Calu3 (cell line): ENCODE measurements at regions of chr13 and their contacts with region 1.

Region 1: GRCh38 chr13:24328145-24328544 is 18.8 kb downstream of the C1QTNF9 start:
- DNase-seq: no peak
- H3K4me3 Mint-ChIP-seq: no peak overlapping the region
- H3K27ac Mint-ChIP-seq: no peak overlapping the region
- H3K4me1 Mint-ChIP-seq: no peaks in the 10 kb centered on the region
- H3K27me3 Mint-ChIP-seq: no peaks in the 10 kb centered on the region
- CTCF ChIP-seq: no peak

Region 2: DNA sequence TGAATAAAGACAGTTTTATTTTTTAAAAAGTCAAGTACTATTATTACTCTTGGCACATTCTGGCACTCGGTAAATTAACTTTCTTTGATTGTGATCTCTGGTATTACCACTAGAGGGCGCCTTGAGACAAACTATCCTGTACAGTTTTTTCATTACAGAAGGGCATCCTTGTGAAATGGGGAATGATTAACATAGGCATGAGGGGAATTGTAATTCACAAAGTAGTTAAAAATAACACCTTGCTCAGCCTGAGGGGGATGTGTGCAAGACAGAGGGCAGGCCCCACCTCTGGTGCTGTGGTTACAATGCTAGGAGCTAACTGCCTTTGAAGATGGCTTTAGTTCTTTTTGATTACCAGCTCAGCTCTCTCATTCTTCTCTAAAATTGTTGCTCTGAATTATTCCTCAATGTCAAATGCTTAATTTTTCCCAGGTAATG is 406.7 kb before region 1 on chr13:
- CTCF ChIA-PET with region 1: no interaction called
- intact Hi-C with region 1: no loop called
- DNase-seq: peak; percentile 38
- H3K4me3 Mint-ChIP-seq: no peak overlapping the region
- H3K27ac Mint-ChIP-seq: no peak overlapping the region
- H3K4me1 Mint-ChIP-seq: peaks cover 29% of the 10 kb centered on the region
- H3K27me3 Mint-ChIP-seq: no peaks in the 10 kb centered on the region
- CTCF ChIP-seq: peak; percentile 54

Region 3: DNA sequence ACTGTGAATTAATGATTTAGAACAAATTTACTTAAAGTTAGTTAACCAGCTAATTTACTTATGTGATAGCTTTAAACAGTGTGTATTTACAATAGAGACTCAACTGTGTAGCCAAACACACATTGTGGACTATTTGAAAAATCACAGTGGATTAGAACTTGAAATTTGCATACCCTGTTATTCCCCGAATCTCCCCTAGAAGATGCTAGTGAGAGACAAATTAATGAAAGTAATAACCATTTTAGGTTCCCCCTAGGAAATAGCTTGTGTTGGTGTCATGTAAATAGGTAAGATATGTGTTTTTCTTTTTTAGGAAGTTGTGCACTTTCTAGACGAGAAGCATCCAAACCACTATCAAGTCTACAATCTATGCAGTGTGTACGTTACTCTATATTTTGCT is 79.7 kb after region 1 on chr13:
- CTCF ChIA-PET with region 1: no interaction called
- intact Hi-C with region 1: loop called (anchors 10 kb)
- DNase-seq: no peak
- H3K4me3 Mint-ChIP-seq: no peak overlapping the region
- H3K27ac Mint-ChIP-seq: no peak overlapping the region
- H3K4me1 Mint-ChIP-seq: no peaks in the 10 kb centered on the region
- H3K27me3 Mint-ChIP-seq: no peaks in the 10 kb centered on the region
- CTCF ChIP-seq: no peak

Region 4: GRCh38 chr13:24557081-24557480 is 228.9 kb after region 1 on chr13:
- CTCF ChIA-PET with region 1: no interaction called
- intact Hi-C with region 1: loop called (anchors 5 kb)
- DNase-seq: no peak
- H3K4me3 Mint-ChIP-seq: no peak overlapping the region
- H3K27ac Mint-ChIP-seq: no peak overlapping the region
- H3K4me1 Mint-ChIP-seq: no peaks in the 10 kb centered on the region
- H3K27me3 Mint-ChIP-seq: peaks cover 6% of the 10 kb centered on the region
- CTCF ChIP-seq: no peak